Left cardiac atrium (tissue), 4 donors: ENCODE measurements at regions of chr4 and their contacts with region 1.

Region 1: GRCh38 chr4:29326816-29327215 is 1393.4 kb upstream of the PCDH7 start:
- DNase-seq: no peak
- ATAC-seq: no peak

Region 2: DNA sequence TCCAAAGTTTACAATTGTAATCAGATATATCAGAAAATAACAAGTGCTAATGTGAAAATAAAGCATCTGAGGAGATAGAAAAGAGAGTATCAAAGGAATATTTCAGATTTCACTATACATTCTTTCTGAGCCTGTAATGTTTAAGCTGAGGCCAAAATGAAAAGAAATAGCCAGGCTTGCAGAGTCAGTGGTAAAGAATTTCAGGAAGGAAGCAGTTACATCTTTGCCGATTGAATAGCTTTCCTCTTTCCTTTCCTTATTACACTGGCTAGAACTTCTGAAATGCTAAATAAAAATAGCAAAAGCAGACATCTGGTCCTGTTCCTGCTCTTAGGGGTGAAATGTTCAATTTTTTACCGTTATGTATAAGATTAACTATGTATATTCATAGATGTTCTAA is 48.2 kb before region 1 on chr4:
- intact Hi-C with region 1: loop called in 1 of 2 experiments (anchors 2 kb)
- DNase-seq: no peak
- ATAC-seq: no peak

Region 3: DNA sequence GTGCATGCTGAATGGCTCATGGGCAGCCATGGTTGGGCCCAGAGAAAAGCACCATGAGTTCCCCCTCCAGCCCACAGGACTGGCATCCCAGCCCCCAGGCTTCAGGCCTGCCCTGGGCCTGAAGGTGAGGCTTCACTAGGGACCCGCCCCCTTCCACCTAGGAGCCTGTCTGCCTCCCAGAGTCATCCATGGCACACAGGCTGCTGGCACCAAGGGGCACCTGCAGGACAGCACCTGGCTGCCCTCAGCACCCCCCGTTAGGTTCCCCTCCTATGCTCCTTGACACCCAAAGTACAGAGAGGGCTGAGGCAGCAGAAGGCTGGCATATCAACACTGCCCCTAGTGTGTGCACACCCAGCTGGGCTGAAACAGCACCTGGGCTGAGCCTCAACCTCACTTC is 826.6 kb after region 1 on chr4:
- intact Hi-C with region 1: no loop called
- DNase-seq: no peak
- ATAC-seq: no peak